CD4-positive, alpha-beta memory T cell (primary cell): ENCODE measurements at regions of chr19 and their contacts with region 1.

Region 1: GRCh38 chr19:41951686-41952172 is 7.4 kb downstream of the RABAC1 start:
- DNase-seq: peak; percentile 72 to 83 (median 76)
- H3K4me3 ChIP-seq: no peak overlapping the region
- H3K4me3 Mint-ChIP-seq: peak overlapping the region in 2 of 8 donors; percentile 5 to 42
- H3K27ac ChIP-seq: no peak overlapping the region
- H3K27ac Mint-ChIP-seq: peak overlapping the region; percentile 42 to 90 (median 81)
- H3K4me1 ChIP-seq: peaks cover 12% of the 10 kb centered on the region
- H3K4me1 Mint-ChIP-seq: peaks cover 10 to 30% (median 15%) of the 10 kb centered on the region in 4 donors
- H3K27me3 ChIP-seq: no peaks in the 10 kb centered on the region
- H3K27me3 Mint-ChIP-seq: no peaks in the 10 kb centered on the region

Region 2: DNA sequence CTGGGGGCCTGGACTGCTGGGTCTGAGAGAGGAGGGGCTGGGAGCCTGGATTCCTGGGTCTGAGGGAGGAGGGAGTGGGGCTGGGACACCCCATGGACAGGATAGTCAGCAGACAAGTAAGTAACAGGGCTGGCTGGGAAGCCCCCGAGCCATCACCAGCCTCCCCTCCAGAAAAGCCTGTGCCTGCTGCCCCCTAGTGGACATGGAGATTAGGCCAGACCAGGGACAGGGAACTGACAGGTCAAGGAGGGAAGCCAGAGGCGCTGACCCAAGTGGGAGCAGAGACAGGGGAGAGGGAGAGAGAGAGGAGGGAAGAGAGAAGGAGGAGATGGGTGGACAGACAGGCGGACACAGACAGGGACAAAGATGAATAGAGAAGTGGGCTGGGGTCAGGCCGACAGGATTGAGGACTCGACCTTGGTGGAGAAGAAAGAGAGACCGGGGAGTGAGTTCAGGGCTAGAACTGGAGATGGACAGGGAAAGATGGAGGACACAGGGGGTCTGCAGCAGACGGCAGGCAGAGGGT is 16.8 kb before region 1 on chr19:
- CTCF ChIA-PET with region 1: interaction called, 5 read pairs
- POLR2A ChIA-PET with region 1: no interaction called
- intact Hi-C with region 1: loop called (anchors 2 kb)
- DNase-seq: peak; percentile 65 to 82 (median 70)
- H3K4me3 ChIP-seq: no peak overlapping the region
- H3K4me3 Mint-ChIP-seq: peak overlapping the region in 2 of 8 donors; percentile 51 to 64
- H3K27ac ChIP-seq: no peak overlapping the region
- H3K27ac Mint-ChIP-seq: peak overlapping the region; percentile 38 to 95 (median 89)
- H3K4me1 ChIP-seq: peaks cover 37% of the 10 kb centered on the region
- H3K4me1 Mint-ChIP-seq: peaks cover 25 to 61% (median 40%) of the 10 kb centered on the region in 4 donors
- H3K27me3 ChIP-seq: no peaks in the 10 kb centered on the region
- H3K27me3 Mint-ChIP-seq: peaks cover 1 to 6% of the 10 kb centered on the region in 2 donors